Activated CD4-positive, alpha-beta T cell treated with anti-CD3 and anti-CD28 coated beads for 36 hours (primary cell): ENCODE measurements at regions of chr10 and their contacts with region 1.

Region 1: GRCh38 chr10:84264611-84265141 is 19.8 kb downstream of the RGR start:
- DNase-seq: peak; percentile 86
- ATAC-seq: peak; percentile 80
- H3K4me3 Mint-ChIP-seq: no peak overlapping the region
- H3K27ac Mint-ChIP-seq: no peak overlapping the region
- H3K4me1 Mint-ChIP-seq: peaks cover 27% of the 10 kb centered on the region
- H3K27me3 Mint-ChIP-seq: peaks cover 10% of the 10 kb centered on the region

Region 2: GRCh38 chr10:84059523-84059922 is 205.2 kb before region 1 on chr10:
- CTCF ChIA-PET with region 1: no interaction called
- POLR2A ChIA-PET with region 1: no interaction called
- intact Hi-C with region 1: no loop called
- DNase-seq: no peak
- ATAC-seq: no peak
- H3K4me3 Mint-ChIP-seq: no peak overlapping the region
- H3K27ac Mint-ChIP-seq: no peak overlapping the region
- H3K4me1 Mint-ChIP-seq: no peaks in the 10 kb centered on the region
- H3K27me3 Mint-ChIP-seq: peaks cover 10% of the 10 kb centered on the region

Region 3: DNA sequence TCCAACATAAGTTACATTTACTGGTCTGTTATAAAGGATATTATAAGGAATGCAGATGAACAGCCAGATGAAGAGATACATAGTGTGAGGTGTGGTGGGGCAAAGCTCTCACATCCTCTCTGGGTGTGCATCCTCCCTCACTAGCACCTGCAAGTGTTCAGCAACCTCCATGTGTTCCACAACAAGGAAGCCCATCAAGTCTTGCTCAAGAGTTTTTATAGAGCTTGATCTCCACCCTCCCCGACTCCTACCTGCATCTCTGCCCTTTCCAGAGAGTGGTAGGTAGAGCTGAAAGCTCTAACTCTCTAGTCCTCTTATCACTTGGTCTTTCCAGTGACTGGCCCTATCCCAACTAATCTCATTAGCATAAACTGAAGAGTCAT is 137.9 kb before region 1 on chr10:
- CTCF ChIA-PET with region 1: no interaction called
- POLR2A ChIA-PET with region 1: no interaction called
- intact Hi-C with region 1: no loop called
- DNase-seq: no peak
- ATAC-seq: peak; percentile 26
- H3K4me3 Mint-ChIP-seq: no peak overlapping the region
- H3K27ac Mint-ChIP-seq: no peak overlapping the region
- H3K4me1 Mint-ChIP-seq: peaks cover 4% of the 10 kb centered on the region
- H3K27me3 Mint-ChIP-seq: peaks cover 24% of the 10 kb centered on the region

Region 4: DNA sequence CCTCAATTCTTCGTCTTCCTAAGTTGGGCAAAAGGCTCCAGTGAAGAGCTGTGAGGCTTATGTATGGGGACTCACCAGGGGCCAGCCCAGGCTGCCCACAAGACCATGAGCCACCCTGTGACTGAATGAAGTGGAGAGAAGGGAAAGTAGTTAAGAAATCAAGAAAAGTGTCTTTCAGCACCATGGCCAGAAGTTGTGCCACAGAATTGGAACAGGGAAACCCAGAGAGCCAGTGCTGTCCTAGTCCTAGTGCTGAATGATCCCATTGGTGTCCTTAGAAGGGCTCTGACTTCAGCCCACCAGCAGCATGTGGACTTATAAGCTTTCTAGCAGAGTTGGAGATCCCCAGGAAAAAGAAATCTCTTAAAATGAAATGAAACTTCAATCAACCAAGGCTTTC is 26.7 kb after region 1 on chr10:
- CTCF ChIA-PET with region 1: interaction called, 17 read pairs
- POLR2A ChIA-PET with region 1: interaction called, 5 read pairs
- intact Hi-C with region 1: no loop called
- DNase-seq: no peak
- ATAC-seq: no peak
- H3K4me3 Mint-ChIP-seq: no peak overlapping the region
- H3K27ac Mint-ChIP-seq: no peak overlapping the region
- H3K4me1 Mint-ChIP-seq: peaks cover 21% of the 10 kb centered on the region
- H3K27me3 Mint-ChIP-seq: peaks cover 7% of the 10 kb centered on the region

Region 5: DNA sequence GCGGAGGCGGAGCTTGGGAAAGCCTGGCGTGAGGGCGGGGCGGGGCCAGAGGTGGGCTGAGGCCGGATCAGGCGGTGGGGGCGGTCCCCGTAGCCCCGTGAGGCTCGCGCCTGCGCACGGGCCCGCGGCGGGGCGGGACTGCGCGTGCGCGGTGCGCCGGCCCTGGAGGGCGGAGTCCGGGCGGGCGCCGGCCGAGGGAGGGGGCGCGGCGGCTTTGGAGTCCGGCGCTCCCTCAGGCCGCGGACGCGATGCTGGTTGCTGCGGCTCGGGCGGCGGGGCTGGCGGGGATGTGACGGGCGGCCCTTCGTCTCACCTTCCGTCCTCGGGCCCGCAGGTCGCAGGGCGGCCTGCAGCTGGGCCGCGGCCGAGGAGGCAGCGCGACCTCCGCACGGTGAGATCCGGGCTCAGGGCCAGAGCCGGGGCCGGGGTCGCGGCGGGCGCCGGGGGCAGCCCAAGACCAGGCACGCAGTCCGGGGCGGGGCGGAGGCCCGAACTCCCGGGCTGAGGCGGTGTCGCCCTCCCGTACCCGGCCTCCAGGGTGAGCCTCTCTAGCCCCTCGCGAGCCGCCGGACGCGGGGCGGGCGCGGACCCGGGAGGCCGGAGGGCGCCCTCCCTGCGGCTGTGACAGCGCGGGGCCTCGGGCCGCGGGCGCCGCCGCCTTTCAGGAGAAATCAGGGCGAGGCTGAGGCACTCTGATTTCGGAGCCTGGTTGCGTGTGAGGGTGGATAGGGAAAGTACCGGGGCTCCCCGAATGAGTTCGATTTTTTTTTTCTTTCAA is 63.9 kb after region 1 on chr10 and contains the start of gene CCSER2:
- CTCF ChIA-PET with region 1: interaction called, 24 read pairs
- POLR2A ChIA-PET with region 1: interaction called, 6 read pairs
- intact Hi-C with region 1: loop called (anchors 1 kb)
- DNase-seq: peak; percentile 98
- ATAC-seq: peak; percentile 74
- H3K4me3 Mint-ChIP-seq: peak within 1 kb of the TSS; percentile 93
- H3K27ac Mint-ChIP-seq: peak within 1 kb of the TSS; percentile 98
- H3K4me1 Mint-ChIP-seq: peaks cover 28% of the 10 kb centered on the region
- H3K27me3 Mint-ChIP-seq: no peaks in the 10 kb centered on the region
- total RNA-seq, gene CCSER2: 61.2 to 85.2 TPM

Region 6: DNA sequence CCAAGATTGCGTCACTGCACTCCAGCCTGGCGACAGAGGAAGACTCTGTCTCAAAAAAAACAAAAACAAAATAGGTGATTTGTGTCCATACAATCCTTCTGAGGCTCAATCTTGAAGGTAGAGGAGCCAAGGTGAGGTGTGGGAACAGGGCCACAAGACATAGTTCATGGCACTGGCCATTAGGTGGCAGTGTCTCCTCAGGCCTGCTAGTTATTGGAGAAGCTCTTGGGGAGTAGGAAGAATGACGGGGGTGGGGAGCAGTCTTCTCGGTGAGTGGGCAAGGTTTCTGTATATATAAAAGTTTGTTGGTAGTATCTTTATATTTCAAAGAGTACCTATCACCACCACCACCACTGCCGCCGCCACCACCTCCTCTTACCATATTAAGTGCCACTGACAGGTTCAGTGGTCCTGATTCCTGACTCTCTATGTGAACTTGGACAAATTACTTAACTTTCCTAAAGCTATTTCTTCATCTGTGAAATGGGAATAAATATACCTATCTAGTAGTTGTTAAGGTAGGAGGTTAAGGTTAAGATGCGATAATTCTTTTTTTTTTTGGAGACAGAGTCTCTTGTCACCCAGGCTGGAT is 87.7 kb after region 1 on chr10:
- CTCF ChIA-PET with region 1: interaction called, 15 read pairs
- POLR2A ChIA-PET with region 1: no interaction called
- intact Hi-C with region 1: no loop called
- DNase-seq: peak; percentile 85
- ATAC-seq: peak; percentile 88
- H3K4me3 Mint-ChIP-seq: no peak overlapping the region
- H3K27ac Mint-ChIP-seq: no peak overlapping the region
- H3K4me1 Mint-ChIP-seq: peaks cover 74% of the 10 kb centered on the region
- H3K27me3 Mint-ChIP-seq: no peaks in the 10 kb centered on the region

Region 7: GRCh38 chr10:84429926-84430520 is 165.3 kb after region 1 on chr10:
- CTCF ChIA-PET with region 1: interaction called, 12 read pairs
- POLR2A ChIA-PET with region 1: no interaction called
- intact Hi-C with region 1: no loop called
- DNase-seq: peak; percentile 82
- ATAC-seq: peak; percentile 90
- H3K4me3 Mint-ChIP-seq: no peak overlapping the region
- H3K27ac Mint-ChIP-seq: no peak overlapping the region
- H3K4me1 Mint-ChIP-seq: peaks cover 31% of the 10 kb centered on the region
- H3K27me3 Mint-ChIP-seq: no peaks in the 10 kb centered on the region

Region 8: GRCh38 chr10:84715911-84716310 is 451.2 kb after region 1 on chr10:
- CTCF ChIA-PET with region 1: no interaction called
- POLR2A ChIA-PET with region 1: no interaction called
- intact Hi-C with region 1: loop called in 1 of 2 experiments (anchors 10 kb)
- DNase-seq: peak; percentile 36
- ATAC-seq: no peak
- H3K4me3 Mint-ChIP-seq: no peak overlapping the region
- H3K27ac Mint-ChIP-seq: no peak overlapping the region
- H3K4me1 Mint-ChIP-seq: no peaks in the 10 kb centered on the region
- H3K27me3 Mint-ChIP-seq: peaks cover 12% of the 10 kb centered on the region